ENCODE measurements at regions of chr17 and their contacts with region 1.

Region 1: GRCh38 chr17:35534576-35535093 is 2.8 kb downstream of the SLFN12L start:
- DNase-seq: no peak
- ATAC-seq: no peak
- H3K4me3 Mint-ChIP-seq: peak overlapping the region; percentile 94
- H3K27ac Mint-ChIP-seq: peak overlapping the region; percentile 99
- H3K4me1 Mint-ChIP-seq: peaks cover 48% of the 10 kb centered on the region
- H3K27me3 Mint-ChIP-seq: no peaks in the 10 kb centered on the region

Region 2: GRCh38 chr17:35373534-35373983 is 161.1 kb before region 1 on chr17 and contains the start of gene SLFN11:
- POLR2A ChIA-PET with region 1: interaction called, 13 read pairs
- DNase-seq: peak; percentile 77
- ATAC-seq: peak; percentile 76
- H3K4me3 Mint-ChIP-seq: peak within 1 kb of the TSS; percentile 94
- H3K27ac Mint-ChIP-seq: peak within 1 kb of the TSS; percentile 95
- H3K4me1 Mint-ChIP-seq: peaks cover 38% of the 10 kb centered on the region
- H3K27me3 Mint-ChIP-seq: peaks cover 12% of the 10 kb centered on the region
- total RNA-seq, gene SLFN11: 44.1 to 47.5 TPM

Region 3: GRCh38 chr17:35476283-35476820 is 58.3 kb before region 1 on chr17:
- POLR2A ChIA-PET with region 1: no interaction called
- DNase-seq: no peak
- ATAC-seq: no peak
- H3K4me3 Mint-ChIP-seq: no peak overlapping the region
- H3K27ac Mint-ChIP-seq: peak overlapping the region; percentile 61
- H3K4me1 Mint-ChIP-seq: peaks cover 26% of the 10 kb centered on the region
- H3K27me3 Mint-ChIP-seq: no peaks in the 10 kb centered on the region

Region 4: GRCh38 chr17:35555695-35556094 is 21.1 kb after region 1 on chr17:
- POLR2A ChIA-PET with region 1: no interaction called
- DNase-seq: no peak
- ATAC-seq: no peak
- H3K4me3 Mint-ChIP-seq: no peak overlapping the region
- H3K27ac Mint-ChIP-seq: no peak overlapping the region
- H3K4me1 Mint-ChIP-seq: no peaks in the 10 kb centered on the region
- H3K27me3 Mint-ChIP-seq: peaks cover 23% of the 10 kb centered on the region

Region 5: DNA sequence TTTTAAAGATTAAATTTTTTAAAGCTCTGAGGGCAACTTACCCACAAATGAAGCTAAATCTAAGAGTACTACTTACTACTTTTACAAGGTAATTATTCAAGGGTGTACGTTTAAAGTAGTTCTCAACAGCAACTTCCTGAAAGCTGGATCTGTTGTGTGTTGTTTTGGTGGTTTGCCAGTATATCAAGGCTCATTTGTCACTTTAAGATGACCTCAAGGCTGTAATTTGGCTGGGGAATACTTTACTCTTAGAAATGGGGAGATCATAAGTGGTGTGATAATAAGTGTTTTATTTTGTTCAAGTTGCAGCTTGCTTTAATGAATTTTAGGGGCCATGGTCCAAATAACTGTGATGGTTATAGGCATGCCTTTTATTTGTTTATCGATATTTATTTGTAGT is 82.9 kb after region 1 on chr17:
- POLR2A ChIA-PET with region 1: no interaction called
- DNase-seq: no peak
- ATAC-seq: no peak
- H3K4me3 Mint-ChIP-seq: no peak overlapping the region
- H3K27ac Mint-ChIP-seq: no peak overlapping the region
- H3K4me1 Mint-ChIP-seq: peaks cover 8% of the 10 kb centered on the region
- H3K27me3 Mint-ChIP-seq: no peaks in the 10 kb centered on the region